H1 (cell line): ENCODE measurements at regions of chr16 and their contacts with region 1.

Region 1: DNA sequence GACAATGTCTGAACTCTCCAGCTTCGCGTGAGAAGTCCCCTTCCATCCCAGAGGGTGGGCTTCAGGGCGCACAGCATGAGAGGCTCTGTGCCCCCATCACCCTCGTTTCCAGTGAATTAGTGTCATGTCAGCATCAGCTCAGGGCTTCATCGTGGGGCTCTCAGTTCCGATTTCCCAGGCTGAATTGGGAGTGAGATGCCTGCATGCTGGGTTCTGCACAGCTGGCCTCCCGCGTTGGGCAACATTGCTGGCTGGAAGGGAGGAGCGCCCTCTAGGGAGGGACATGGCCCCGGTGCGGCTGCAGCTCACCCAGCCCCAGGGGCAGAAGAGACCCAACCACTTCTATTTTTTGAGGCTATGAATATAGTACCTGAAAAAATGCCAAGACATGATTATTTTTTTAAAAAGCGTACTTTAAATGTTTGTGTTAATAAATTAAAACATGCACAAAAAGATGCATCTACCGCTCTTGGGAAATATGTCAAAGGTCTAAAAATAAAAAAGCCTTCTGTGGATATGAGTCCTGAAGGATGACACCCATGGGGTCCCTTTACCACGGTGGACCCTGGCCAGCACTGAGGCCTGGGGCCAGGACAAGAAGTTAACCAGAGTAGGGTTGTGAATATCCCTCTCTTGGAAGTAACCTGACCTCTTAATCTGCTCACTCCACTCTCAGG is 10.5 kb upstream of the ITGAD start:
- DNase-seq: peak; percentile 33 to 88
- H3K4me3 ChIP-seq: no peak overlapping the region; a peak in 1 of 8 replicates
- H3K27ac ChIP-seq: no peak overlapping the region
- H3K4me1 ChIP-seq: peaks cover 0 to 1% (median 0%) of the 10 kb centered on the region in 4 experiments; a peak in 2 of 7 replicates
- H3K27me3 ChIP-seq: no peaks in the 10 kb centered on the region
- CTCF ChIP-seq: peak; percentile 86 to 96 (median 88)
- EP300 ChIP-seq: no peak
- POLR2A ChIP-seq: no peak
- RAD21 ChIP-seq: peak; percentile 84 to 87

Region 2: GRCh38 chr16:31202414-31203375 is 179.9 kb before region 1 on chr16 and contains the start of gene PYCARD:
- CTCF ChIA-PET with region 1: interaction called, 10 read pairs
- POLR2A ChIA-PET with region 1: interaction called, 5 read pairs
- DNase-seq: peak in 1 of 2 experiments; percentile 79
- H3K4me3 ChIP-seq: peak within 1 kb of the TSS; percentile 61 to 74 (median 72)
- H3K27ac ChIP-seq: no peak within 1 kb of the TSS
- H3K4me1 ChIP-seq: peaks cover 0 to 7% (median 4%) of the 10 kb centered on the region in 4 experiments; a peak in 5 of 7 replicates
- H3K27me3 ChIP-seq: peaks cover 0 to 6% (median 3%) of the 10 kb centered on the region in 4 experiments; a peak in 3 of 7 replicates
- CTCF ChIP-seq: no peak
- EP300 ChIP-seq: no peak
- POLR2A ChIP-seq: peak; percentile 0 to 12; a peak in 2 of 3 replicates
- RAD21 ChIP-seq: no peak
- total RNA-seq, gene PYCARD: 29.9 and 32.2 TPM in 2 replicates

Region 3: GRCh38 chr16:31327646-31328242 is 54.9 kb before region 1 on chr16:
- CTCF ChIA-PET with region 1: no interaction called
- POLR2A ChIA-PET with region 1: no interaction called
- DNase-seq: no peak
- H3K4me3 ChIP-seq: no peak overlapping the region
- H3K27ac ChIP-seq: no peak overlapping the region
- H3K4me1 ChIP-seq: peaks cover 0 to 25% (median 9%) of the 10 kb centered on the region in 4 experiments; a peak in 5 of 7 replicates
- H3K27me3 ChIP-seq: peaks cover 4 to 33% (median 27%) of the 10 kb centered on the region in 4 experiments
- CTCF ChIP-seq: no peak
- EP300 ChIP-seq: no peak
- POLR2A ChIP-seq: no peak
- RAD21 ChIP-seq: no peak

Region 4: GRCh38 chr16:31371619-31372484 is 10.8 kb before region 1 on chr16:
- CTCF ChIA-PET with region 1: interaction called, 12 read pairs
- POLR2A ChIA-PET with region 1: interaction called, 3 read pairs
- DNase-seq: no peak
- H3K4me3 ChIP-seq: no peak overlapping the region
- H3K27ac ChIP-seq: no peak overlapping the region
- H3K4me1 ChIP-seq: no peaks in the 10 kb centered on the region
- H3K27me3 ChIP-seq: no peaks in the 10 kb centered on the region
- CTCF ChIP-seq: no peak
- EP300 ChIP-seq: no peak
- POLR2A ChIP-seq: no peak
- RAD21 ChIP-seq: no peak

Region 5: GRCh38 chr16:31395647-31396046 is 13.0 kb after region 1 on chr16:
- CTCF ChIA-PET with region 1: interaction called, 38 read pairs
- POLR2A ChIA-PET with region 1: no interaction called
- DNase-seq: no peak
- H3K4me3 ChIP-seq: no peak overlapping the region
- H3K27ac ChIP-seq: no peak overlapping the region
- H3K4me1 ChIP-seq: peaks cover 0 to 5% (median 2%) of the 10 kb centered on the region in 4 experiments; a peak in 2 of 7 replicates
- H3K27me3 ChIP-seq: no peaks in the 10 kb centered on the region
- CTCF ChIP-seq: no peak
- EP300 ChIP-seq: no peak
- POLR2A ChIP-seq: no peak
- RAD21 ChIP-seq: no peak